CD8-positive, alpha-beta T cell (primary cell): ENCODE measurements at regions of chrX and their contacts with region 1.

Region 1: DNA sequence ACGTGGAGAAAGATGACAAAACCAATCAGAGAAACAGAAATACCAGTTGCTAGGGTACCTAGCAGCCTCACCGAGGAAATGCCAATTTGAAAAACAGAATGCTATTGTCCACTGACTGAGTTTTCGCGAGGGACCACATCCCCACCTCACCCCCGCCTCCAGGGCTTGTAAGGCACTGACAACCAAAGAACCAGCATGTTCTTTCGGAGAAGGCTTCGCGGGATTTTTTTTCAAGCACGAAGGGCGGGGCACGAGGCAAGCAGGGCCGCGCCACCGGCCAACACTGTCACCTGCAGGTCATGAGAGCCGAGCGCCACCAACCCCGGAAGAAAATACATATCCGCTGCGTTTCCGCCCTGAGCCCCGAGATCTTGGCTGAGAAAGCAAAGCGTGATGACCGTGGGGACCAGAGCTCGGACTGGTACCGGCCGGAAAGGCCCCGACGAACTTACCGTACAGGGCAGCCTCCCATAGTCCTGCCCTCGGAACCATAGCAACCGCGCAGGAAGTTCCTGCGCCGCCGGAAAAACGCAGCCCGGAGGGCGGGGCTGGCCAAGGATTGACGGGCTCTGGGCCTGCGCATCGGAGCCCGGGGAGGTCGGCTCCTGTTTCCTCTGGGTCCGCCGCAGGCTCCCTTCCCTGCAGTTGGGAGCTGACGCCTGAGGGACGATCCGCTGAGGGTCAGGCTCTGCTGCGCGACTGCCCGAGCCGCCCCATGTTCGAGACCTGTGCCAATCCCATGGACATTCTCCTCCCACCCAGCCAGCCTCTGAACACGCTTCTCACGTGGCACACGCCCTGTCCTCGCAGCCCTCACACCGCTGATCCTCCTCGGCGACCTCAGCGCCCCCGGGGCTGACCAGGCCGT is 59.2 kb upstream of the PAGE5 start:
- DNase-seq: peak; percentile 81 to 94 (median 91)
- ATAC-seq: peak; percentile 91
- H3K4me3 ChIP-seq: peak overlapping the region; percentile 74 to 89
- H3K4me3 Mint-ChIP-seq: peak overlapping the region; percentile 92
- H3K27ac ChIP-seq: peak overlapping the region; percentile 97
- H3K27ac Mint-ChIP-seq: peak overlapping the region; percentile 98
- H3K4me1 ChIP-seq: peaks cover 9% of the 10 kb centered on the region
- H3K4me1 Mint-ChIP-seq: peaks cover 16% of the 10 kb centered on the region
- H3K27me3 ChIP-seq: no peaks in the 10 kb centered on the region
- H3K27me3 Mint-ChIP-seq: no peaks in the 10 kb centered on the region
- CTCF ChIP-seq: peak; percentile 64

Region 2: GRCh38 chrX:53683556-53684414 is 1477.1 kb before region 1 on chrX:
- CTCF ChIA-PET with region 1: no interaction called
- POLR2A ChIA-PET with region 1: no interaction called
- intact Hi-C with region 1: loop called (anchors 1 to 5 kb)
- DNase-seq: peak; percentile 75 to 98 (median 86)
- ATAC-seq: peak; percentile 78
- H3K4me3 ChIP-seq: peak overlapping the region; percentile 76 to 86
- H3K4me3 Mint-ChIP-seq: peak overlapping the region; percentile 88
- H3K27ac ChIP-seq: peak overlapping the region; percentile 94 to 97
- H3K27ac Mint-ChIP-seq: peak overlapping the region; percentile 97
- H3K4me1 ChIP-seq: peaks cover 31% of the 10 kb centered on the region
- H3K4me1 Mint-ChIP-seq: peaks cover 49% of the 10 kb centered on the region
- H3K27me3 ChIP-seq: no peaks in the 10 kb centered on the region
- H3K27me3 Mint-ChIP-seq: no peaks in the 10 kb centered on the region
- CTCF ChIP-seq: no peak

Region 3: GRCh38 chrX:54439967-54440871 is 720.7 kb before region 1 on chrX and contains the start of gene TSR2:
- CTCF ChIA-PET with region 1: interaction called, 3 read pairs
- POLR2A ChIA-PET with region 1: no interaction called
- intact Hi-C with region 1: loop called (anchors 2 to 5 kb)
- DNase-seq: peak; percentile 55 to 90 (median 78)
- ATAC-seq: peak; percentile 93
- H3K4me3 ChIP-seq: peak within 1 kb of the TSS; percentile 93 to 96
- H3K4me3 Mint-ChIP-seq: peak within 1 kb of the TSS; percentile 92
- H3K27ac ChIP-seq: peak within 1 kb of the TSS; percentile 66 to 73
- H3K27ac Mint-ChIP-seq: peak within 1 kb of the TSS; percentile 91
- H3K4me1 ChIP-seq: peaks cover 21% of the 10 kb centered on the region
- H3K4me1 Mint-ChIP-seq: peaks cover 31% of the 10 kb centered on the region
- H3K27me3 ChIP-seq: no peaks in the 10 kb centered on the region
- H3K27me3 Mint-ChIP-seq: no peaks in the 10 kb centered on the region
- CTCF ChIP-seq: no peak
- total RNA-seq, gene TSR2: 38.7 to 41.4 TPM

Region 4: GRCh38 chrX:54808605-54809483 is 352.1 kb before region 1 on chrX:
- CTCF ChIA-PET with region 1: no interaction called
- POLR2A ChIA-PET with region 1: no interaction called
- intact Hi-C with region 1: loop called (anchors 5 kb)
- DNase-seq: peak; percentile 73 to 96 (median 85)
- ATAC-seq: peak; percentile 71
- H3K4me3 ChIP-seq: peak overlapping the region; percentile 92 to 96
- H3K4me3 Mint-ChIP-seq: peak overlapping the region; percentile 93
- H3K27ac ChIP-seq: peak overlapping the region; percentile 92
- H3K27ac Mint-ChIP-seq: peak overlapping the region; percentile 95
- H3K4me1 ChIP-seq: peaks cover 13% of the 10 kb centered on the region
- H3K4me1 Mint-ChIP-seq: peaks cover 21% of the 10 kb centered on the region
- H3K27me3 ChIP-seq: no peaks in the 10 kb centered on the region
- H3K27me3 Mint-ChIP-seq: no peaks in the 10 kb centered on the region
- CTCF ChIP-seq: no peak

Region 5: GRCh38 chrX:55057675-55058249 is 103.2 kb before region 1 on chrX:
- CTCF ChIA-PET with region 1: no interaction called
- POLR2A ChIA-PET with region 1: no interaction called
- intact Hi-C with region 1: loop called (anchors 1 to 2 kb)
- DNase-seq: peak in 5 of 9 experiments; percentile 1 to 64 (median 33)
- ATAC-seq: peak; percentile 75
- H3K4me3 ChIP-seq: peak overlapping the region in 1 of 2 experiments; percentile 20
- H3K4me3 Mint-ChIP-seq: peak overlapping the region; percentile 71
- H3K27ac ChIP-seq: no peak overlapping the region
- H3K27ac Mint-ChIP-seq: peak overlapping the region; percentile 77
- H3K4me1 ChIP-seq: peaks cover 12% of the 10 kb centered on the region
- H3K4me1 Mint-ChIP-seq: peaks cover 15% of the 10 kb centered on the region
- H3K27me3 ChIP-seq: no peaks in the 10 kb centered on the region
- H3K27me3 Mint-ChIP-seq: no peaks in the 10 kb centered on the region
- CTCF ChIP-seq: peak; percentile 87

Region 6: GRCh38 chrX:55451990-55452832 is 291.3 kb after region 1 on chrX and contains the start of gene MAGEH1:
- CTCF ChIA-PET with region 1: no interaction called
- POLR2A ChIA-PET with region 1: interaction called, 3 read pairs
- intact Hi-C with region 1: loop called in 1 of 2 experiments (anchors 10 kb)
- DNase-seq: peak; percentile 55 to 92 (median 78)
- ATAC-seq: peak; percentile 91
- H3K4me3 ChIP-seq: peak within 1 kb of the TSS; percentile 76 to 86
- H3K4me3 Mint-ChIP-seq: peak within 1 kb of the TSS; percentile 93
- H3K27ac ChIP-seq: peak within 1 kb of the TSS; percentile 81 to 83
- H3K27ac Mint-ChIP-seq: peak within 1 kb of the TSS; percentile 97
- H3K4me1 ChIP-seq: peaks cover 12% of the 10 kb centered on the region
- H3K4me1 Mint-ChIP-seq: peaks cover 20% of the 10 kb centered on the region
- H3K27me3 ChIP-seq: no peaks in the 10 kb centered on the region
- H3K27me3 Mint-ChIP-seq: no peaks in the 10 kb centered on the region
- CTCF ChIP-seq: no peak
- total RNA-seq, gene MAGEH1: 13.0 to 14.7 TPM